ENCODE measurements at regions of chr15 and their contacts with region 1.

Region 1: GRCh38 chr15:41283653-41284426 is 48.6 kb downstream of the OIP5 start:
- DNase-seq: peak; percentile 98 to 99
- ATAC-seq: peak; percentile 93 to 98 (median 94)
- H3K4me3 ChIP-seq: peak overlapping the region; percentile 69
- H3K4me3 Mint-ChIP-seq: peak overlapping the region; percentile 94
- H3K27ac ChIP-seq: peak overlapping the region; percentile 86
- H3K27ac Mint-ChIP-seq: peak overlapping the region; percentile 96 to 99
- H3K4me1 ChIP-seq: peaks cover 20% of the 10 kb centered on the region
- H3K4me1 Mint-ChIP-seq: peaks cover 37 to 40% of the 10 kb centered on the region in 2 donors
- H3K27me3 ChIP-seq: no peaks in the 10 kb centered on the region
- H3K27me3 Mint-ChIP-seq: no peaks in the 10 kb centered on the region
- CTCF ChIP-seq: no peak

Region 2: DNA sequence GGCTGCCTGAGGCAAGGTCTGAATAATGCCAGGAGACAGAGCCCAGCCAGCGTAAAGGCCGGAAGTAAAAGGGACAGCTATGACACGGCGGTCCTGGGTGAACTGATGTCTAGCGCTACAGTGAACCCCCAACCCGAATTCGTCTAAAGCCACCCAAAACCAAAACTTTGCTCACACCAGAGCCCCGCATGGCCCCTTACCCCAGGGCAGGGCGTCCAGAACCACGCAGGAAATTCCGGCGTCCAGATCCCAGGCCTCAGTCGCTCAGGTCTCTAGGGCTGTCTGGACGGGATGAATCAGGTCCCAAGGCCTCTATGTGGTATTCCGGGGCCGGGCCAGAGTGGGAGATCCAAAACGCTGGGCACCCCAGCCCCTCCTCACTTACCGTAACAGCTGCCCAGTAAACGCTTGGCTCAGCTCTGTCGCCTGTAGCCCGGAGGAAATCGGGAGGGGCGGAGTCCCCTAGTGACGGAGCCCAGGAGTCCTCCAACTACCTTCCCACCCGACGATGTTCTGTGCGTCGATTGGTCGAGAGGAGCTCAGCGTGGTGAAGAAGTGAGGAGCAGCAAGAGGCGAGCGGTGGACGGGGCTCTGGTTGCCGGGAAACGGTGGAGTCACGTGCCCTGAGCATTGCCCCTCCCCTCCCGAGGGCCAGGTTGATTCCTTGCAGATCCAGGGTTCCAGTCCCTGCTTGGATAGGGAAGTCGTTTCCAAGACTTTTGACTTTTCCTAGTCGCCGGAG is 719.1 kb before region 1 on chr15 and contains the start of gene CCDC32:
- intact Hi-C with region 1: loop called (anchors 10 kb)
- DNase-seq: peak; percentile 87 to 98
- ATAC-seq: peak; percentile 88 to 97 (median 92)
- H3K4me3 ChIP-seq: peak within 1 kb of the TSS; percentile 92
- H3K4me3 Mint-ChIP-seq: peak within 1 kb of the TSS; percentile 95
- H3K27ac ChIP-seq: peak within 1 kb of the TSS; percentile 92
- H3K27ac Mint-ChIP-seq: peak within 1 kb of the TSS; percentile 94 to 95
- H3K4me1 ChIP-seq: peaks cover 19% of the 10 kb centered on the region
- H3K4me1 Mint-ChIP-seq: peaks cover 34 to 43% of the 10 kb centered on the region in 2 donors
- H3K27me3 ChIP-seq: no peaks in the 10 kb centered on the region
- H3K27me3 Mint-ChIP-seq: no peaks in the 10 kb centered on the region
- CTCF ChIP-seq: no peak
- total RNA-seq, gene CCDC32: 34.2 to 43.7 (median 37.4) TPM

Region 3: GRCh38 chr15:41116116-41116871 is 167.5 kb before region 1 on chr15 and contains the start of gene INO80:
- intact Hi-C with region 1: loop called (anchors 5 kb)
- DNase-seq: peak; percentile 92 to 98
- ATAC-seq: peak; percentile 83 to 93 (median 84)
- H3K4me3 ChIP-seq: peak within 1 kb of the TSS; percentile 96
- H3K4me3 Mint-ChIP-seq: peak within 1 kb of the TSS; percentile 96
- H3K27ac ChIP-seq: peak within 1 kb of the TSS; percentile 82
- H3K27ac Mint-ChIP-seq: peak within 1 kb of the TSS; percentile 98 to 99
- H3K4me1 ChIP-seq: peaks cover 11% of the 10 kb centered on the region
- H3K4me1 Mint-ChIP-seq: peaks cover 19 to 24% of the 10 kb centered on the region in 2 donors
- H3K27me3 ChIP-seq: no peaks in the 10 kb centered on the region
- H3K27me3 Mint-ChIP-seq: no peaks in the 10 kb centered on the region
- CTCF ChIP-seq: no peak
- total RNA-seq, gene INO80: 36.4 to 45.7 (median 43.9) TPM

Region 4: DNA sequence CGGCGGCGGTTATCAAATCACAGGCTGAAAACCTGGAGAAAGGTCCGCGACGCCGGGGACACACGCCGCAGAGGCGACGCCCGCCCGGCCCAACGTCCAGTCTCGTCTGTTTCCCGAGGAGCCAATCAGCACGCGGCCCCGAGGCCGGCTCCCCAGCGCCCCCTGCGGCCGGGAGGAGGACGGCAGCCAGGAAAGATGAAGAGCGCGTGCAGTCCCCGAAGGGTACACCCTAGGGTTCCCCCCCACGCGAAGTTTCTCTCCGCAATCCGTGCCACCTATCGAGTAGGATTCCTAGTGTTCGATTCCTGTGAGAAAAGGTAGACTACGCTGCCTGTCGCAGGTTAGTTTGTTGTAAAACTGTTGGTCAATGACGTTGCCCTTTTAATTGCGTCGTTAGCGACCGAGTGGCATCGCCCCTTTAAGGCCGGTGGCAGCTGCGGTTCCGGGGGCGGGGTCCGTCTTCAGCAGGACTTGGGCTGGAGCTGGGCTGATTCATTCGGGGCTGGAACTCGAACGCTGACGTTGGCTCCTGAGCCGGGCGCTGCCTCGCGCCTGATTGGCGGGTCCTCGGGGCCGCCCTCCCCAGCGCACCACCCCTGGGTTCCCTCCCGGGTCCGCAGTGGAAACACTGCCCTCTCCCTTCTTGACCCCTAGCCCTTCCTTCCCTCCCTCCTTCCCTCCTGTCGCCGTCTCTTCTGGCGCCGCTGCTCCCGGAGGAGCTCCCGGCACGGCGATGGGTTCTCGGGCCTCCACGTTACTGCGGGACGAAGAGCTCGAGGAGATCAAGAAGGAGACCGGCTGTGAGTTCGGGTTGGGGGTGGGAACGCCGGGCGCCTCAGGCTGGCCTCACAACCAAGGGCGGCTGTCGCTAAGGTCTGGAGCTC is 52.9 kb before region 1 on chr15 and contains the starts of genes CHP1 and EXD1:
- intact Hi-C with region 1: loop called (anchors 1 kb)
- DNase-seq: peak; percentile 95 to 96
- ATAC-seq: peak; percentile 95 to 97 (median 96)
- H3K4me3 ChIP-seq: peak within 1 kb of the TSS; percentile 89
- H3K4me3 Mint-ChIP-seq: peak within 1 kb of the TSS; percentile 79
- H3K27ac ChIP-seq: peak within 1 kb of the TSS; percentile 88
- H3K27ac Mint-ChIP-seq: peak within 1 kb of the TSS; percentile 87 to 97
- H3K4me1 ChIP-seq: peaks cover 19% of the 10 kb centered on the region
- H3K4me1 Mint-ChIP-seq: peaks cover 35 to 37% of the 10 kb centered on the region in 2 donors
- H3K27me3 ChIP-seq: no peaks in the 10 kb centered on the region
- H3K27me3 Mint-ChIP-seq: no peaks in the 10 kb centered on the region
- CTCF ChIP-seq: peak; percentile 97
- total RNA-seq, gene CHP1: 50.7 to 55.9 (median 51.3) TPM
- total RNA-seq, gene EXD1: not detected

Region 5: GRCh38 chr15:41331833-41332787 is 48.3 kb after region 1 on chr15 and contains the start of gene OIP5:
- intact Hi-C with region 1: loop called (anchors 1 kb)
- DNase-seq: peak; percentile 93 to 99
- ATAC-seq: peak; percentile 95 to 99 (median 96)
- H3K4me3 ChIP-seq: peak within 1 kb of the TSS; percentile 75
- H3K4me3 Mint-ChIP-seq: peak within 1 kb of the TSS; percentile 98
- H3K27ac ChIP-seq: peak within 1 kb of the TSS; percentile 46
- H3K27ac Mint-ChIP-seq: peak within 1 kb of the TSS; percentile 90 to 99
- H3K4me1 ChIP-seq: peaks cover 12% of the 10 kb centered on the region
- H3K4me1 Mint-ChIP-seq: peaks cover 26 to 27% of the 10 kb centered on the region in 2 donors
- H3K27me3 ChIP-seq: no peaks in the 10 kb centered on the region
- H3K27me3 Mint-ChIP-seq: no peaks in the 10 kb centered on the region
- CTCF ChIP-seq: peak; percentile 41
- total RNA-seq, gene OIP5: 0.29 to 0.64 TPM in 2 of 3 donors, not detected in the other

Region 6: DNA sequence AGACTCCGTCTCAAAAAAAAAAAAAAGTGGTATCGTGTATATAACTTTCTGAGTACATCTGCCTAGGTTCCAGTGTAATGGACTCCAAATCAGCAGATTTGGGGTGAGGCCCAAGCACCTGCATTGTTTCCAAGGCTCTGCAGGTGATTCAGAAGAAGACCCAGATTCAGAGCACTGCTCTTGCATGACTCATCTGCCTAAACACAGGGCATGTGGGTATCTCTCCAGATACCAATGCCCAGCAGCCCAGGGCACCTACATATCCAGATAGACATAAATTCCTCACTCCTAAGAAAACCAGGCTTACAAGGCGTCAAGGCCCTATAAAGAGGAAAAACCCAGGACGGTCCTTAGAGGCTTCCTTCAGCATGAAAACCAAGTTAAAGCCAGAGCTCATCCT is 94.1 kb after region 1 on chr15:
- intact Hi-C with region 1: no loop called
- DNase-seq: no peak
- ATAC-seq: no peak
- H3K4me3 ChIP-seq: no peak overlapping the region
- H3K4me3 Mint-ChIP-seq: no peak overlapping the region
- H3K27ac ChIP-seq: no peak overlapping the region
- H3K27ac Mint-ChIP-seq: no peak overlapping the region
- H3K4me1 ChIP-seq: no peaks in the 10 kb centered on the region
- H3K4me1 Mint-ChIP-seq: no peaks in the 10 kb centered on the region
- H3K27me3 ChIP-seq: no peaks in the 10 kb centered on the region
- H3K27me3 Mint-ChIP-seq: no peaks in the 10 kb centered on the region
- CTCF ChIP-seq: no peak

Measured in natural killer cell (primary cell).